Heart right ventricle (tissue), 16 donors: ENCODE measurements at regions of chr2 and their contacts with region 1.

Region 1: DNA sequence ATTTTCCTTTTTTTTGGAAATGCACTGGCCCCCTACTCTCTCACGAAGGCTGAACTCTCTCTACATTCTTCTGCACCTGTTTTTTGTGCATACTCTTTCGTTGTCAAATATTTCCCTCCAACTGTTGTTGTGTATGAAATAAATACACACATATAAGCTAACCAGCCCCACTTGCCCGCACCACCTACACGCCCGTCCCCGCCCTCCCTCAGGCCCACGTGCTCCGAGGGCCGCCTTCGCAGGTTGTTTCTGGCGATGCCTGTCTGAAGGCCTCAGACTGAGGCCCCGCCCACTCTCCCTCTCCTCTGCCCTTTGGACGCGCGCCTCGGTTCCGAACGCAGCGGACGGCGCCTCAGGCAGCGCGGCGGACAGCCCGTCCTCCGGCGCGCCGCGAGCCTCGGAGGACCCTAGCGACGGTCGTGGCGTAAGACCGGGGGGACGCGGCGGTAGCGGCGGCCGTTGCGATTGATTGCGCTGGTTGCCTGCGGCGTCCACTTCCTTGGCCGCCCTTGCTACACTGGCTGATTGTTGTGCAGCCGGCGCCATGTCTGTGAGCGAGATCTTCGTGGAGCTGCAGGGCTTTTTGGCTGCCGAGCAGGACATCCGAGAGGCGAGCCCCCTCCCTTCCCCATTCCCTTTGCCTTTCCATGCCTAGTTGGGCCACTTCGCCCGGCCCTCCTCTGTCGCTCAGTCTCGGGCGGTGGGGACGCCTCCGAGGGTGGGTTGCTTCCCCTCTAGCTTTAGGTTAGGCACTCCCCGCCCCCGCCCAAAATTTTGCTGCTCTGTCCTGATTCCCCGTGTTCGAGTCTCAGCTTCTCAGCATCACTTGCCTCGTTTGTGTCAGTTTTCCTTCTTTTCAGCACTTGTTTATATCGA is at the start of gene TSN:
- DNase-seq: peak; percentile 97 to 98
- ATAC-seq: peak; percentile 99 to 100 (median 100)
- H3K4me3 ChIP-seq: peak within 1 kb of the TSS; percentile 79 to 95 (median 90)
- H3K27ac ChIP-seq: peak within 1 kb of the TSS; percentile 28 to 86 (median 79)
- H3K4me1 ChIP-seq: peaks cover 5 to 32% (median 28%) of the 10 kb centered on the region in 9 donors
- H3K27me3 ChIP-seq: no peaks in the 10 kb centered on the region
- CTCF ChIP-seq: no peak
- total RNA-seq, gene TSN: 32.5 to 54.4 (median 48.7) TPM

Region 2: DNA sequence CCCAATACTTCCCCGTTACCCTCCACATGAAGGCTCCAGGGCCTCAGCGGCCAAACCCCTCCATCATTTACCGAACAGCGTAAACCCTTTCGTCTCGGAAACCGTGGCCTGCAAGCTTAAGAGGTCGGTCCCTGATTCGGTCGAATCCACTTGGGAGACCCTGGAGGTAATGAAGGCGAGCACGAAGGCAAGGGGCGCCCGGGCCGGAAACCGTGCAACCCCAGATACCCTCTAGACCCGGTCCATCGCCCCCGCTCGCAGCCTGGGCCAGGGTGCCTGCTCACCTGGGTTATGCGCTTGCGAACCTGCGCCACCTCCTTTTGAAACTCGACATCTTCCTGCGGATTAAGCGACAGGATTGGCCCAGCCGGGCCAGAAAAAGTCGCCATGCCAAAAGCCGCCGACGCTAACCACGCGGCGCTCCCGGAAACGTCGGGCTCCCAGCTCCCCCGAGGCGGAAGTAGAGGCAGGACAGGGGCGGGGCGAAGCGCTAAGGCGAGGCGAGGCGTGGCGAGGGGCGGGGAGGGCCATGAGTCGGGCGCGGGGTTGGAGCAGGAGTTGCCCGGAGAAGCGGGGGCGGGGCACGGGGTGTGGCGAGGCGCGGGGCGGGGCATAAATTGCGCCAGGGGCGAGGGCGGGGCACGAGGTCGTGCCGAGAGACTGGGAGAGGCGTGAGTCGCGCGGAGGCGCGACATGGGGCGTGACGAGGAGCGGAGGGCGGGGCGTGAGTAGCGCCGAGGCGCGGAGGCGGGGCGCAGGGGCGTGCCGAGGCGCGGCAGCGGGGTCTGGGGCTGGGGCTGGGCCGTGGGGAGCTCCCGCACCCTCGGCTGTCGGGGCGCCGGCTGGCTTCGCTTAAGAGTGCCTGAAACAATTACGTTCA is 18.8 kb before region 1 on chr2 and contains the start of gene NIFK:
- intact Hi-C with region 1: loop called in 2 of 10 experiments (anchors 1 to 2 kb)
- DNase-seq: peak; percentile 99 to 100
- ATAC-seq: peak; percentile 97 to 99 (median 99)
- H3K4me3 ChIP-seq: peak within 1 kb of the TSS; percentile 68 to 99 (median 75)
- H3K27ac ChIP-seq: peak within 1 kb of the TSS; percentile 30 to 93 (median 80)
- H3K4me1 ChIP-seq: peaks cover 0 to 21% (median 15%) of the 10 kb centered on the region in 9 donors
- H3K27me3 ChIP-seq: no peaks in the 10 kb centered on the region
- CTCF ChIP-seq: peak in 1 of 9 donors; percentile 10
- total RNA-seq, gene NIFK: 20.8 to 29.7 (median 24.7) TPM

Region 3: DNA sequence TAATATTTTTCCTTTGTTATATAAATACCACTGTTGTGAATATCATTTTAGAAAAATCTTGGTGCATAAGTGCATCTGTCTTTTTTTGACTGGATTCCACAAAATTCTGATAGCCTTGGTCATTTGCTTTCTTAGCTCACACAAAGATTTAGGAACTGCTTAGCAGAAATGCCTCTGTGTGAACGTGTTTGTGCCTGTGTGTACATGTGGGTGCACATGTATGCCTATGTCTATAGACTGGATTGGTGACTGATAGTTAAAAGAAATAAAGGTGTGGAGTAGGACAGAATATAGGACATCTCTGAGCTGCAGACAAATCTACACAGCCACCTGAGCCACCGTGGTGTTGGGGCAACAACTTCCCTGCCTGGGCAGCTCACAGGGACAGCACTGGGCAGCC is 93.8 kb after region 1 on chr2:
- intact Hi-C with region 1: no loop called
- DNase-seq: no peak
- ATAC-seq: no peak
- H3K4me3 ChIP-seq: no peak overlapping the region
- H3K27ac ChIP-seq: no peak overlapping the region
- H3K4me1 ChIP-seq: no peaks in the 10 kb centered on the region
- H3K27me3 ChIP-seq: peaks cover 0 to 8% (median 0%) of the 10 kb centered on the region in 7 donors
- CTCF ChIP-seq: no peak